H1 (cell line): ENCODE measurements at regions of chr11 and their contacts with region 1.

Region 1: DNA sequence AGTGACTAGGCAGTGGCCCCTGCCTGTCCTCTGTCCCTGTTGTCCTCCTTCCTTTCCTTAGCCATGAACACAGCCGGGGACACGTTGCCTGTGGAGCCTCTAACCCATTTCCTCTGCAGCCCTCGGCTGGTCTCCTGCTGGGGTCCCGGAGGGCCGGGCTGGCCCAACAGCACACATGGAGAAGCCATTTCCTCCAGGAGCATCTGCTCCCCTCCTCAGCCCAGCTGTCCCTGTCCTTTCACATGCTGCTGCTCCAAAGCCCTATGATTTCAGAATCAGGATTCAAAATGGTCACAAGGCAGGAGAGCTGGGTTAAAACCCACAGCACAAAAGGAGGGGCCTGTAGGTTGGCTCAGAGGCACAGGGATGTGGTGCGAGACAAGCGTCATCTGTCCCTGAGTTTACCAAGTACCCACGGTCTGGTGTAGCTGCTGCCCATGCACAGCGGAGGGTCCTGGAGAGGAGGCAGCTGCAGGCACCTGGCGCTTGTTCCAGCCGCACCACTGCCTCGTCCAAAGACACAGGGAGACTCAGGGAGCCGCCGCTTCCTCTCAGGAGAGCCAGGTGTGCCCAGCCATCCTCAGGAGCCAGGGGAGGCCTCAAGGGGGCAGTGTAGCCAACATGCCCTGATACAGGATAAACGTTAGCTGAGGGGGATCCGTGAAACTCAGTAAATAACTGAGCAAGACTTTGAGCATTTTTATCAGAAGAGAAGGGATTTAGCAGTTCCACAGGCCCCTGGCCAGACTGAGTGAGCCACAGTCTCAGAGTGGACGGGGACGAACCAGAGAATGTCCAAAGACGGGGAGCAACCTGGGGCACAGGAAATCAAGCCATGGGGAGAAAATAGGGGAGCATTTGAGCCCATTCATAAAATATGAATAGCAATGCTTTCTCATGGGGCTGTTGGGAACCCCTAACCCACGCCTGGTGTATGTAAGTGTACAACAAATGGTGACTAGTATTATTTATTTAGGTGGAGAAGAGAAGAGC is 3.9 kb upstream of the VSIG10L2 start:
- DNase-seq: peak; percentile 64 to 91
- H3K4me3 ChIP-seq: no peak overlapping the region
- H3K27ac ChIP-seq: no peak overlapping the region
- H3K4me1 ChIP-seq: peaks cover 7 to 11% (median 9%) of the 10 kb centered on the region in 4 experiments
- H3K27me3 ChIP-seq: no peaks in the 10 kb centered on the region
- CTCF ChIP-seq: peak; percentile 74 to 92 (median 90)
- EP300 ChIP-seq: peak in 1 of 2 experiments; percentile 63; a peak in 1 of 3 replicates
- POLR2A ChIP-seq: no peak
- RAD21 ChIP-seq: peak; percentile 71 to 78

Region 2: DNA sequence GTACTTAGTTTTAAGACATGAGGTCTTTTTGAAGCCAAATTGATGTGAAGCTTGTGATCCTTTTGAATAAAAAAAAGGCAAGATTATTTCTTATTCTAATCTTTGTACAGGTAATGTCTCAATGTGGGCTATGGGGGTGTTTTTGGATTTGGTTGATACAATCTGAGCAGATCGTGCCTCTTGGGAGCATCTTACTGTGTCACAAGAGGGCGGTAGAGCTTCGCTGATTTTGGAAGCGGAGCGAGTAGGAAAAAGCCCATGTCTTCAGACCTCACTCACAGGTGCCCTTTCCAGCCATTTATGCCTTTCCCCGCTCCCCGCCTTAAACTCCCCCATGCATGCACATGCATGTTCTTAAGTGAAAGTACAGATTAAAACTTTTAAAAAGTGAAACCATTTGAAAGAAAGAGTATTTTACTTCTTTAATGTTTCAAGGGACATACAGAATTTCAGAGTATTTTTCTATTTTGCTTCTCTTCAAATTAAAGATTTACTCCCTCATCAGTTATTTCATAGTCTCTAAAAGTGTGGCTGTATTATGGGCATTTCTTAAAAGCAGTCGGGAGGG is 18.8 kb before region 1 on chr11:
- CTCF ChIA-PET with region 1: interaction called, 76 read pairs
- POLR2A ChIA-PET with region 1: interaction called, 3 read pairs
- DNase-seq: peak in 1 of 2 experiments; percentile 34
- H3K4me3 ChIP-seq: no peak overlapping the region
- H3K27ac ChIP-seq: no peak overlapping the region
- H3K4me1 ChIP-seq: no peaks in the 10 kb centered on the region; a peak in 1 of 7 replicates
- H3K27me3 ChIP-seq: no peaks in the 10 kb centered on the region; a peak in 1 of 7 replicates
- CTCF ChIP-seq: peak; percentile 64 to 88 (median 86)
- EP300 ChIP-seq: no peak
- POLR2A ChIP-seq: no peak
- RAD21 ChIP-seq: peak; percentile 96

Region 3: DNA sequence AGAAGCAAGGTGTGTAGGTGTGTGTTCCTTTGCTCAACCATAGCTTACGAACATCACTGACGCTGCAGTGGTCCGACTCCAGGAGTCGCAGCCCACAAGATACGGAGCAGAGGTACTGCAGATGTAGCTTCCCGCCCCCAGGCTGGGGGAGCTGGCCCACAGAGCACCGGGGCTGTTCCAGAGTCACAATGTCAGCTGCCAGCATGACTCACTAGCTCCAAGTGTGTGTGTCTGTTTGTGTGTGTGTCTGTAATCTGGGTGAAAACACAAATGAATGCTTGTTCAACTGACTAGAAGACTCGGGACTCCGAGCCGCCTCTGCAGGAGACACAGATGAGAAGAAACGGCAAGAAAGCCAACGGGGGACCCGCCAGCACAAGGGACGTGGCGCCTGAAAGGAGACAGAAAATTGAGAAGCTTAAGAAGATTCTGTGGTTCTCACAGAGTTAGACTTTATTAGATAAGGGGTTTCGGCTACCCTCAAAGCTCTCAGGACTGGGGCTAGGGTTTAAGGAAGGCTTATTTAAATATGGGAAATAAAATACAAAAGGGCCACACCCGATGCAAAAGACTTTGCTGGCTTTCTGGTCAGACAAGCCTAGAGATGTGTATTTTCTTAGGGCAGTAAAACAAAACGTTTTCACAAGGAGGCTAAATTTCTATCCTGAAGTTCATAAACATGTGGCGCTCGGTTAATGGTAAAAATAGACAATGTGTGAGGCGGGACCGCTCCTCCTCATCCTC is 14.6 kb after region 1 on chr11:
- CTCF ChIA-PET with region 1: interaction called, 65 read pairs
- POLR2A ChIA-PET with region 1: interaction called, 5 read pairs
- DNase-seq: no peak
- H3K4me3 ChIP-seq: no peak overlapping the region
- H3K27ac ChIP-seq: no peak overlapping the region
- H3K4me1 ChIP-seq: peaks cover 0 to 2% (median 0%) of the 10 kb centered on the region in 4 experiments; a peak in 2 of 7 replicates
- H3K27me3 ChIP-seq: no peaks in the 10 kb centered on the region
- CTCF ChIP-seq: no peak
- EP300 ChIP-seq: no peak
- POLR2A ChIP-seq: no peak
- RAD21 ChIP-seq: no peak

Region 4: DNA sequence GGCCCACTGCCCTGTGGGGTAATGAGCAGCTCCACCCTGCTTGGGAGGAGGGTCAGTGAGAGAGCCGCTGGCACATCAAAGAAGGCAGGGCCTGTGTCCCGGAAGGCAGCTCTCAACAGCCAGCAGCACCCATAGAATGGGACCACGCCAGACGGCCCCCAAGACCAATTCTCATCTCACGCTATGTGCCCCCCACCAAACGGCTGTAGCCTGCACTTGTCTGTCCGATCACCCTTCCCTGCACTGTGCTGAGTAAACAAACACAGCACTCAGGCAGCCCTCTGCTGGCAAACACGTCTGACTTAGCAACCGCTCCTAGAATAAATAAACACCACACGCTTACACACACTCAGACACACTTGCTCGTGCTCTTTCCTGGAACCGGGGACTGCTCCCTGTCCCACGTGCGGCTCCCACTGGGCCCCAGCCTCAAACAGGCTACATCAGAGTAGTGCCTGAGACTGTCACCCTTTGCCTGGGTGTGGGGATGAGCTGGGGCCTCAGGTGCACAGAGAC is 174.0 kb after region 1 on chr11:
- CTCF ChIA-PET with region 1: interaction called, 11 read pairs
- POLR2A ChIA-PET with region 1: no interaction called
- DNase-seq: no peak
- H3K4me3 ChIP-seq: no peak overlapping the region
- H3K27ac ChIP-seq: no peak overlapping the region; the same call in 1 of the 2 replicates
- H3K4me1 ChIP-seq: peaks cover 0 to 7% (median 0%) of the 10 kb centered on the region in 4 experiments; a peak in 3 of 7 replicates
- H3K27me3 ChIP-seq: 0 out of 7 replicates have a peak, but pooled peaks cover 0 to 3% (median 0%) of the 10 kb centered on the region in 4 experiments
- CTCF ChIP-seq: peak in 2 of 3 experiments; percentile 8 to 20; a peak in 2 of 4 replicates
- EP300 ChIP-seq: no peak
- POLR2A ChIP-seq: no peak
- RAD21 ChIP-seq: peak in 1 of 2 experiments; percentile 16; a peak in 2 of 4 replicates

Region 5: GRCh38 chr11:126186708-126187529 is 245.0 kb after region 1 on chr11:
- CTCF ChIA-PET with region 1: interaction called, 11 read pairs
- POLR2A ChIA-PET with region 1: no interaction called
- DNase-seq: no peak
- H3K4me3 ChIP-seq: no peak overlapping the region
- H3K27ac ChIP-seq: no peak overlapping the region
- H3K4me1 ChIP-seq: peaks cover 0 to 2% (median 0%) of the 10 kb centered on the region in 4 experiments; a peak in 1 of 7 replicates
- H3K27me3 ChIP-seq: no peaks in the 10 kb centered on the region
- CTCF ChIP-seq: peak; percentile 25 to 45 (median 32)
- EP300 ChIP-seq: no peak
- POLR2A ChIP-seq: no peak
- RAD21 ChIP-seq: peak; percentile 56 to 63

Region 6: DNA sequence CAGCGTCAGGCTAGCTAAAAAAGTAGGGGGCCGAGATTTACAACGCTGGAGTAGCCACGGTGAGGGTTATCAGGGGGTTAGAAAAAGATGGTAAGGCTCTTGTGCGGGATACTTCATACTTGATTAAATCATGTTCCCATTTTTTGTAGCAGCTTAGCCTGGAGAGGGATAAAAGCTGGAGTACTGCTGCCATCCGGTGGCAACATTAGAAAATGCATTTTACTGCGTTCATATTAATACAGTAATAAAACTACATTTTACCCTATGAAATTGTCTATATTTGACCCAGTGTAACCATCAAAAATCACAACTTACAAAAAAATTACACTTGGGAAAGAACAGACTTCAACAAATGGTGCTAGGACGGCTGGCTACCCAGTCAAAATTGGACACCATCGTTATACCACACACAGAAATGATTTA is 252.2 kb after region 1 on chr11:
- CTCF ChIA-PET with region 1: interaction called, 12 read pairs
- POLR2A ChIA-PET with region 1: no interaction called
- DNase-seq: peak in 1 of 2 experiments; percentile 62
- H3K4me3 ChIP-seq: no peak overlapping the region
- H3K27ac ChIP-seq: no peak overlapping the region
- H3K4me1 ChIP-seq: no peaks in the 10 kb centered on the region; a peak in 1 of 7 replicates
- H3K27me3 ChIP-seq: no peaks in the 10 kb centered on the region
- CTCF ChIP-seq: peak in 2 of 3 experiments; percentile 62 to 69; a peak in 3 of 4 replicates
- EP300 ChIP-seq: no peak
- POLR2A ChIP-seq: no peak
- RAD21 ChIP-seq: peak; percentile 93 to 95